Sigmoid colon (tissue), 7 donors: ENCODE measurements at regions of chr6 and their contacts with region 1.

Region 1: DNA sequence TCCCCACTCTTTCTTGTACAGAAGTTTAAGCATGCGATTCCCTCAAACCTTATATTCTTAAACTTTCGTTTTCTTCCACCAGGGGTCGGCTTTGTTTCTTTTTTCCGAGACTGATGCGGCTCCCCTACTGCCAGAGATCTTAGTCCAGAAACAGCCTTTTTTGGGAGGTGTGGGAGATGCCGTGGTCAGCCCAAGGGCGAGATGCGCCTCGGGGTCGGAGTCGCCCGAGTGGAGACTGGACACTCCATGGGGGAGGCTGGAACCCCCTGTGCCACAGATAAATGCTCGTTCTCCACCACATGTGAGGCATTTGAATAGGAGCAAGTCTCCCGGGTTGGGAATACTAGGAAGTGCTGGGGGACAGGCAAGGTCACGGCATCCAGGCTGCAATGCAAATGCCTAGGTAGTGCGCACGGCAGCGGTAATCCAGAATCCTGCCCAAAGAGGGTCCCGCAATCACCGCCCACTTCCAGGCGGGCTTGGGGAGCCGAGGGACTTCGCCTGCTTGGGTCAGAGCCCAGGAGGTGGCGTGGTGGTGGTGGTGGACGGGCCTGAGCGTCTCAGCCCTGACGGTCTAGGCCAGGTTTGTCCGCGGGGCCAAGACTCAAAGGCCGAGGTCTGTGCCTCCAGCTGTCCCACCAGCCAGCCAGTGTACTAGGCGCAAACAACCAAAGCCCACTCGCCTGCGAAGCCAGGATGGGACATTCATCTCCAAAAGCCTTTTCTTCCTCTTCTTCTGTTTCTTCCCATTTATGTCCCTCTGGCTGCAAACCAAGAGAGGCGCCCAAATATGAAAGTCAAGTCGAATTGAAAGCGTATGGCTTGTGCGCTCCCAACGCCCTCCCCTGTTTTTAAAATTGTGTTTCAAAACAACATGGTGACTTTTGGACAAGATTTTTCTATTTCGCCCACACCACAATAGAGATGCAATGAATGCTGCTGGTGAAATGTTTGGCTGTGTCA is 39.3 kb upstream of the OSTM1 start:
- DNase-seq: no peak
- H3K4me3 ChIP-seq: peak overlapping the region in 2 of 4 donors; percentile 25 to 38
- H3K27ac ChIP-seq: no peak overlapping the region
- H3K4me1 ChIP-seq: peaks cover 0 to 47% (median 42%) of the 10 kb centered on the region in 4 donors
- H3K27me3 ChIP-seq: peaks cover 40 to 84% (median 49%) of the 10 kb centered on the region in 3 donors
- CTCF ChIP-seq: peak in 3 of 4 experiments; percentile 32 to 44 (median 39)
- EP300 ChIP-seq: no peak
- POLR2A ChIP-seq: no peak

Region 2: GRCh38 chr6:108157234-108157980 is 43.6 kb after region 1 on chr6:
- intact Hi-C with region 1: no loop called
- DNase-seq: no peak
- H3K4me3 ChIP-seq: peak overlapping the region in 3 of 4 donors; percentile 12 to 35 (median 25)
- H3K27ac ChIP-seq: no peak overlapping the region
- H3K4me1 ChIP-seq: peaks cover 0 to 15% (median 13%) of the 10 kb centered on the region in 4 donors
- H3K27me3 ChIP-seq: peaks cover 47 to 100% (median 91%) of the 10 kb centered on the region in 3 donors
- CTCF ChIP-seq: no peak
- EP300 ChIP-seq: no peak
- POLR2A ChIP-seq: no peak

Region 3: GRCh38 chr6:108492131-108492766 is 378.4 kb after region 1 on chr6:
- intact Hi-C with region 1: loop called (anchors 10 kb)
- DNase-seq: no peak
- H3K4me3 ChIP-seq: no peak overlapping the region
- H3K27ac ChIP-seq: no peak overlapping the region
- H3K4me1 ChIP-seq: no peaks in the 10 kb centered on the region
- H3K27me3 ChIP-seq: no peaks in the 10 kb centered on the region
- CTCF ChIP-seq: peak in 2 of 4 experiments; percentile 34 to 44
- EP300 ChIP-seq: no peak
- POLR2A ChIP-seq: no peak

Region 4: DNA sequence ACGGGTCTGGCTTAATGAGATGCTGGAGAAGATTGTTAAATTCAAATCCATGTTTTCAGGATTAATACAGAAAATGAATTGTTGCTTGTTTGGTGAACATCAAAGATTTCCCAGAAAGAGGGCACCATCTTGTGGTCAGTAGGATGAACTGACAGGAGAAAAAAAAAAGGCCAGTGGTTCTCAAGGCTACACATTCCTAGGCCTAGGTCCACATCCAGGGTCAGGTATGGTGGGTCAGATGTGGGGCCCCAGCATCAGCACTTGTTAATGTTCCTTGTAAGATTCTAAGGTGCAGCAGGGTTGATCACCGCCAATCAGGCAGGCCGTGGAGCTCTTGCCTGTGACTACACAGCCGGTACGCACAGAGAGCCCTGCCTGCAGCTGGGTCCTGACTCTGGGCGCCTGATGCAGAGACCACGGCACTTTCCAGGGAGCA is 412.9 kb after region 1 on chr6:
- intact Hi-C with region 1: loop called (anchors 1 kb)
- DNase-seq: no peak
- H3K4me3 ChIP-seq: no peak overlapping the region
- H3K27ac ChIP-seq: no peak overlapping the region
- H3K4me1 ChIP-seq: no peaks in the 10 kb centered on the region
- H3K27me3 ChIP-seq: no peaks in the 10 kb centered on the region
- CTCF ChIP-seq: peak; percentile 45 to 86 (median 64)
- EP300 ChIP-seq: no peak
- POLR2A ChIP-seq: no peak